Heart left ventricle (tissue), 16 donors: ENCODE measurements at regions of chr7 and their contacts with region 1.

Region 1: DNA sequence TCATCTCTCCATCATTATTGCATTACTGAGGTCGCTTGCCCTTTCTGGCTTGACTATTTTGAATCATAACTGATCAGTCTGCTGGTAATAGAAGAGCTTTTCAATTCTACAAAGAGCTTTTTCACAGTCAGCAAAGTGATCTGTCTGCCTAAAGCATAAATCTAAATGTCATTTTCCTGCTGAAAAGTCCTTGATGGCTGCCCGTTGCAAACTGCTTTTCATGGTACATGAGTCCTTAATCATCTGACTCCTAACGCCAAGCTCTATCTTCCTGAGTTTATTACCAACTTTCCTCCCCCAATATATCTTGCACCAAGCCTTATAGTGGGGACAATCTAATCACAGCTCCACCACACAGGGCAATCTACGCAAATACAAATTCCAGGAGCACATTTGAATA is 39.8 kb downstream of the THSD7A start:
- DNase-seq: no peak
- ATAC-seq: no peak
- H3K4me3 ChIP-seq: no peak overlapping the region
- H3K27ac ChIP-seq: no peak overlapping the region
- H3K4me1 ChIP-seq: no peaks in the 10 kb centered on the region
- H3K27me3 ChIP-seq: no peaks in the 10 kb centered on the region
- CTCF ChIP-seq: no peak
- POLR2A ChIP-seq: no peak

Region 2: GRCh38 chr7:11858622-11859302 is 66.6 kb after region 1 on chr7:
- intact Hi-C with region 1: loop called in 1 of 10 experiments (anchors 10 kb)
- DNase-seq: no peak
- ATAC-seq: no peak
- H3K4me3 ChIP-seq: no peak overlapping the region
- H3K27ac ChIP-seq: no peak overlapping the region
- H3K4me1 ChIP-seq: no peaks in the 10 kb centered on the region
- H3K27me3 ChIP-seq: no peaks in the 10 kb centered on the region
- CTCF ChIP-seq: no peak
- POLR2A ChIP-seq: no peak